ENCODE measurements at regions of chr6 and their contacts with region 1.

Region 1: GRCh38 chr6:11496152-11497060 is 41.1 kb upstream of the TMEM170B start:
- DNase-seq: peak; percentile 83 to 92 (median 86)
- H3K4me3 ChIP-seq: peak overlapping the region in 1 of 7 experiments; percentile 9
- H3K27ac ChIP-seq: no peak overlapping the region
- H3K4me1 ChIP-seq: peaks cover 0 to 9% (median 8%) of the 10 kb centered on the region in 4 experiments
- H3K27me3 ChIP-seq: no peaks in the 10 kb centered on the region

Region 2: DNA sequence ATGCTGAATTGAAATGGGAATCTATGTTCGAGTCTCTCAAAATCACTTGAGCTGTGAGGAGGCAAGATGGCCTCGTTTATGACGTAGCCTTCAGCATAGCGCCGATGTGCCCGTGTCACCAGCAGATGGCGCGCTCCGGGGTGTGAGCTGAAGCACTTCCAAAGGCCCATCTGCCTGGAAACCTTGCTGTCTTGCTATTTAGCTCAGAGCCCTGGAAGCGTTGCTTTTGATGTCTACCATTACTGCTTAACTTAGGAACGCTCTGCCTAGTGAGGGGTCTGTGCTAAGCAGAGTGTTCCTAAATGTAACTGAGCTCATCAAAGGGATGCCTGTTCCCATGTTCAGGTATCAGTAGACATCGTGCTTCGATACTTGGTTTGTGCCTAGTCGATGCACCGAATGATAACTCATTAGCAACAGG is 541.8 kb before region 1 on chr6:
- CTCF ChIA-PET with region 1: interaction called, 23 read pairs
- POLR2A ChIA-PET with region 1: no interaction called
- DNase-seq: peak; percentile 64 to 82 (median 81)
- H3K4me3 ChIP-seq: no peak overlapping the region
- H3K27ac ChIP-seq: no peak overlapping the region
- H3K4me1 ChIP-seq: no peaks in the 10 kb centered on the region
- H3K27me3 ChIP-seq: no peaks in the 10 kb centered on the region

Region 3: DNA sequence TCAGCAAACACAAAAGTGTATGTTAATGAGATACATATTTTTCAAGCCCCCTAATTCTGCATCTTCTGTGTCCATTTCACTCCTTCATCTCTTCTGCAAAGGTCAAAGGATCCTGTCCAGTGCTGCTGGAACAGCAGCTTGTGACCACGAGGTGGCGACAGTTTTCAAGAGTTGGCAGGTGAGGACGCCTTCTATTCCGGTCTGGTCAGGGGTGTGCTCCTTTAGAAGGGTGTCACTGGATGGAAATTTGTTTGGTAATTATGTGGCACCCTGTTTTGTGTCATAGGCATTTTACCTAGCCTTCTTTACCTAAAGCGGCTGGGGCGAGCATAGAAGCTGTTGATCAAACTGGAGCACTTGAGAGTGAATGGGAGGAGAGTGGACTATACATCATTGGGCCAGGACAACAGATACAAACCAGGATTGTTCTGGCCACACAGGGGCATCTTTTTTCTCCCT is 352.0 kb before region 1 on chr6:
- CTCF ChIA-PET with region 1: interaction called, 89 read pairs
- POLR2A ChIA-PET with region 1: no interaction called
- DNase-seq: peak; percentile 65 to 73 (median 66)
- H3K4me3 ChIP-seq: no peak overlapping the region
- H3K27ac ChIP-seq: no peak overlapping the region
- H3K4me1 ChIP-seq: peaks cover 0 to 5% (median 1%) of the 10 kb centered on the region in 4 experiments
- H3K27me3 ChIP-seq: no peaks in the 10 kb centered on the region

Region 4: GRCh38 chr6:11172501-11173332 is 323.7 kb before region 1 on chr6:
- CTCF ChIA-PET with region 1: interaction called, 103 read pairs
- POLR2A ChIA-PET with region 1: no interaction called
- DNase-seq: peak; percentile 56 to 76 (median 71)
- H3K4me3 ChIP-seq: peak overlapping the region in 1 of 7 experiments; percentile 36
- H3K27ac ChIP-seq: no peak overlapping the region
- H3K4me1 ChIP-seq: peaks cover 0 to 3% (median 0%) of the 10 kb centered on the region in 4 experiments
- H3K27me3 ChIP-seq: no peaks in the 10 kb centered on the region

Region 5: GRCh38 chr6:11298651-11299420 is 197.6 kb before region 1 on chr6:
- CTCF ChIA-PET with region 1: no interaction called
- POLR2A ChIA-PET with region 1: no interaction called
- DNase-seq: no peak
- H3K4me3 ChIP-seq: no peak overlapping the region
- H3K27ac ChIP-seq: no peak overlapping the region
- H3K4me1 ChIP-seq: peaks cover 0 to 6% (median 0%) of the 10 kb centered on the region in 4 experiments
- H3K27me3 ChIP-seq: no peaks in the 10 kb centered on the region

Region 6: DNA sequence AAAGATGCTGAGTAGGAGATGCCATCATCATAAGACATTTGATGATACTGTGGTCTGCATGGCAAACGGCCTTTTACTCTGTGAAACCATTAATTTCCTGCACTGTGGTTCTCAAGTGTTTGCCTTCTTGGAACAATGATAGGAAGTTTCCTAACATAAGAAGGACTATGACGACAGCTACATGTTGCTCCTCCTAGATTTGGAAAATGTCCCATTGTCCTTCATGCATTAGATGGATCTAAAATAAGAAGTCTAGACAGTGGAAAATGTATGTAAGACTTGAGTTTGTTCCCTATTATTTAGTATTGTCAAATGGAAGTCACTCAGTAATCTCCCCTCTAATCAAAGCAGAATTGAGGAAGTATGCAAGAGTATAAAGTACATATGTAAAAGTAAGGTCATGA is 57.4 kb before region 1 on chr6:
- CTCF ChIA-PET with region 1: no interaction called
- POLR2A ChIA-PET with region 1: no interaction called
- DNase-seq: peak in 2 of 3 donors; percentile 52 to 67
- H3K4me3 ChIP-seq: no peak overlapping the region
- H3K27ac ChIP-seq: no peak overlapping the region
- H3K4me1 ChIP-seq: no peaks in the 10 kb centered on the region
- H3K27me3 ChIP-seq: no peaks in the 10 kb centered on the region

Region 7: DNA sequence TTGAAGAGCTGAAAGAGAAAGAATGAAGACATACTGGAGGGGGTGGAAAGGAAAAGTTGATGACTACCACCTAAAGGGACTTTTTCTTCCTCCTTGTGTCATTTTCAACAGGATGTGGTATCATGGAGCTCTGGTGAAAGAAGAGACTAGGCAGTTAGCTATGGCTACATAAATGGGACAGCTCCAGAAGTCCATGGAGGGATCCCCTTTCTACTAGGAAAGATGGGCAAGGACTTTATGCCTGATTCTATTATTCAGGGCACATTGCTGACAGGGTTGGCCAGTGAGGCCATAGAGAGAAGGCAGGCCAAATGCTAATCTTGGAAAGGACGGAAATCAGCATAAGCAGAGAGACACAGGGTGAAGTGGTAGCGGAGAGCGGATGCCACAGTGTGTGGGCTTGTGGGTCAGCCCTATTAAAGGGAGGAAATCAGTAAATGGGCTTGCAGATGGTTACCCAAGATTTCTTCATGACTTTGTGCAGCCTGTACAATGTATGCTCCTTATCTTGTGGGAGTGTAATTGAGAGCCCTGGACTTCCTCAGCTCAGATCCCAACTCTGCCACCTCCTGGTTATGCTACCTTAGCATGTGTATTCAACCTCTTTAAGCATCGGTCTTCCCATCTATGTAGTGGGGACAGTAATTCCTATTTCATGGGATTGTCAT is 36.3 kb before region 1 on chr6:
- CTCF ChIA-PET with region 1: no interaction called
- POLR2A ChIA-PET with region 1: no interaction called
- DNase-seq: peak in 2 of 3 donors; percentile 8 to 22
- H3K4me3 ChIP-seq: no peak overlapping the region
- H3K27ac ChIP-seq: no peak overlapping the region
- H3K4me1 ChIP-seq: peaks cover 0 to 10% (median 7%) of the 10 kb centered on the region in 4 experiments
- H3K27me3 ChIP-seq: no peaks in the 10 kb centered on the region

Region 8: DNA sequence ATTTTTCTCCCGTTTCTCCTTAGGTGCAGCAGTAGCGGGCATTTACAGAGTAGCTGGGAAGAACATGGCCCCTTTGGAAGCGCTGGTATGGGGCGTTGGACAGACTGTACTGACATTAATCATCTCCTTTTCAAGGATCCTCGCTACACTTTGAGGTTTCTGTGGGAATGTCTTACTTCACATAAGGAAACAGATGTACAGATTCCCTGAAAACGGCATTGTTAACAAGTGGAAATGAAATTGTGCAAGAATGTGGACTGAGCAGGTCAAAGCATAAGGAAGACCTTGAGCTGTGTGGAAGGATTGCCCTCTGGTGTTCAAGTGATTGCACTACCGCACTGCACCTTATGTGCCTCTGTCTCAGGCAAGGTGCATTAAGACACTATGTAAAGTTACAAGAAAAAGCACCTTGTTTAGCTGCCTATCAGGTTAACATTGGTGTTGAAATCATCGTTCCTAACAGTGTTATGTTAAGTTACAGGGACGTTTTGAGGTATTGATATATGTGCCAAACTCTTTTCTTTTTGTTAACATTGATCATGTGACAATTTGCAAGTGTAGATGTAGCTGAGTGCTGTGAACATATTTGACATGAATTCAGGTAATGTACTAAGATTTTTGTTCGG is 79.1 kb after region 1 on chr6:
- CTCF ChIA-PET with region 1: interaction called, 28 read pairs
- POLR2A ChIA-PET with region 1: no interaction called
- DNase-seq: peak; percentile 78 to 85 (median 84)
- H3K4me3 ChIP-seq: peak overlapping the region in 4 of 7 experiments; percentile 26 to 57 (median 46)
- H3K27ac ChIP-seq: no peak overlapping the region
- H3K4me1 ChIP-seq: peaks cover 0 to 4% (median 2%) of the 10 kb centered on the region in 4 experiments
- H3K27me3 ChIP-seq: no peaks in the 10 kb centered on the region

Region 9: DNA sequence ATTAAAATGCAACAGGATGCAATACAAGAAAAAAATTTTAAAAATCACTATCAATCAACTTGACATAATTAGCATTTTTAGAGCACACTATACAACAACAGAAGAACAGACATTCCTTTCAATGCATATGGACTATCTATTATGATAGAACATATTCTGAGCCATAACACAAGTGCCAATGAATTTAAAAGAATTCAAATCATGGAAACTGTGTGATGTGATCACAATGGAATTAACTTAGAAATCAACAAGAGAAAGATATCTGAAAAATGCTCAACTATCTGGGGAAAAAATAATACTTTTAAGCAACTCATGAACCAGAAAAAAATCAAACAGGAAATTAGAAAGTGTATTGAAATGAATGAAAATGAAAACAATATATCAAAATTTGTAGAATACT is 175.8 kb after region 1 on chr6:
- CTCF ChIA-PET with region 1: no interaction called
- POLR2A ChIA-PET with region 1: no interaction called
- DNase-seq: no peak
- H3K4me3 ChIP-seq: no peak overlapping the region
- H3K27ac ChIP-seq: no peak overlapping the region
- H3K4me1 ChIP-seq: no peaks in the 10 kb centered on the region
- H3K27me3 ChIP-seq: no peaks in the 10 kb centered on the region

Measured in common myeloid progenitor, CD34-positive (primary cell).